Activated CD8-positive, alpha-beta T cell treated with anti-CD3 and anti-CD28 coated beads for 36 hours (primary cell): ENCODE measurements at regions of chr12 and their contacts with region 1.

Region 1: GRCh38 chr12:120649442-120650232 is 9.2 kb downstream of the CABP1 start:
- DNase-seq: no peak
- ATAC-seq: no peak
- H3K4me3 Mint-ChIP-seq: peak overlapping the region; percentile 46
- H3K27ac Mint-ChIP-seq: no peak overlapping the region
- H3K4me1 Mint-ChIP-seq: peaks cover 7% of the 10 kb centered on the region
- H3K27me3 Mint-ChIP-seq: peaks cover 48% of the 10 kb centered on the region
- CTCF ChIP-seq: peak; percentile 57

Region 2: GRCh38 chr12:120580787-120581723 is 68.6 kb before region 1 on chr12 and contains the start of gene POP5:
- CTCF ChIA-PET with region 1: interaction called, 180 read pairs
- POLR2A ChIA-PET with region 1: interaction called, 3 read pairs
- intact Hi-C with region 1: loop called (anchors 1 kb)
- DNase-seq: peak; percentile 97
- ATAC-seq: peak; percentile 96
- H3K4me3 Mint-ChIP-seq: peak within 1 kb of the TSS; percentile 98
- H3K27ac Mint-ChIP-seq: peak within 1 kb of the TSS; percentile 90
- H3K4me1 Mint-ChIP-seq: peaks cover 36% of the 10 kb centered on the region
- H3K27me3 Mint-ChIP-seq: peaks cover 13% of the 10 kb centered on the region
- CTCF ChIP-seq: no peak
- total RNA-seq, gene POP5: 44.3 to 51.1 TPM

Region 3: DNA sequence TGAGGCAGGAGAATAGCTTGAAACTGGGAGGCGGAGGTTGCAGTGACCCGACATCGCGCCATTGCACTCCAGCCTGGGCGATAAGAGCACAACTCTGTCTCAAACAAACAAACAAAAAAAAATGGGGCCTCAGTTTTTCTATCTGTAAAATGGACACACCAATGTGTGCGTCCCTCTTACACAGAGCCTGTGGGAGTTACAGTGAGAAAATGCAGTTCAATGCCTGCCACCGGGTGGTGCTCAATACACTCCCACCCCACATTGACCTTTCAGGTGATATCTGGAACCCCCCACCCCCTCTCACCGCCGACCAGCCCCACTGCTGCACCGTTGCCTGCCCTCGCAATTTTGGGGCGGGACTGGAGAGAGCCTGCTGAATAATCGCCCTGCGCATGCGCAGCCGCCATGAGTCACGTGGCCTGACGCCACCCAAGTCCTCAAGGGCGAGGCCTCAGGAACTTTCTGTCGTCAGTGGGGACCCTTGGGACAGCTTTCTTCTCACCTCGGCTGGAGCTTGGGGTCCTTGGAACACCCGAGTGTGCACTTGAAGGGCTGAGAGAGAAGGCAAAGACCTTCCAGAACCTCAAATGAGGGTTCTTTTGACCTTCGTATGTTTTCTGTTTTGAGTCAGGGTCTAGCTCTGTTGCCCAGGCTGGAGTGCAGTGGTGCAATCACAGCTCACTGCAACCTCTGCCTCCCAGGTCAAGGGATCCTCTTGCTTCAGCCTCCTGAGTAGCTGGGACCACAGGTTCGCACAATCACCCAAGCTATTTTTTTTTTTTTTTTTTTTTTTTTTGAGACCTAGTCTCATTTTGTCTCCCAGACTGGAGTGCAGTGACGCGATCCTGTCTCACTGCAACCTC is 23.8 kb before region 1 on chr12:
- CTCF ChIA-PET with region 1: interaction called, 16 read pairs
- POLR2A ChIA-PET with region 1: no interaction called
- intact Hi-C with region 1: no loop called
- DNase-seq: peak; percentile 68
- ATAC-seq: peak; percentile 91
- H3K4me3 Mint-ChIP-seq: no peak overlapping the region
- H3K27ac Mint-ChIP-seq: no peak overlapping the region
- H3K4me1 Mint-ChIP-seq: no peaks in the 10 kb centered on the region
- H3K27me3 Mint-ChIP-seq: no peaks in the 10 kb centered on the region
- CTCF ChIP-seq: no peak

Region 4: GRCh38 chr12:120677765-120678473 is 28.3 kb after region 1 on chr12:
- CTCF ChIA-PET with region 1: interaction called, 84 read pairs
- POLR2A ChIA-PET with region 1: interaction called, 3 read pairs
- intact Hi-C with region 1: no loop called
- DNase-seq: peak; percentile 55
- ATAC-seq: peak; percentile 89
- H3K4me3 Mint-ChIP-seq: no peak overlapping the region
- H3K27ac Mint-ChIP-seq: peak overlapping the region; percentile 59
- H3K4me1 Mint-ChIP-seq: peaks cover 12% of the 10 kb centered on the region
- H3K27me3 Mint-ChIP-seq: no peaks in the 10 kb centered on the region
- CTCF ChIP-seq: no peak

Region 5: DNA sequence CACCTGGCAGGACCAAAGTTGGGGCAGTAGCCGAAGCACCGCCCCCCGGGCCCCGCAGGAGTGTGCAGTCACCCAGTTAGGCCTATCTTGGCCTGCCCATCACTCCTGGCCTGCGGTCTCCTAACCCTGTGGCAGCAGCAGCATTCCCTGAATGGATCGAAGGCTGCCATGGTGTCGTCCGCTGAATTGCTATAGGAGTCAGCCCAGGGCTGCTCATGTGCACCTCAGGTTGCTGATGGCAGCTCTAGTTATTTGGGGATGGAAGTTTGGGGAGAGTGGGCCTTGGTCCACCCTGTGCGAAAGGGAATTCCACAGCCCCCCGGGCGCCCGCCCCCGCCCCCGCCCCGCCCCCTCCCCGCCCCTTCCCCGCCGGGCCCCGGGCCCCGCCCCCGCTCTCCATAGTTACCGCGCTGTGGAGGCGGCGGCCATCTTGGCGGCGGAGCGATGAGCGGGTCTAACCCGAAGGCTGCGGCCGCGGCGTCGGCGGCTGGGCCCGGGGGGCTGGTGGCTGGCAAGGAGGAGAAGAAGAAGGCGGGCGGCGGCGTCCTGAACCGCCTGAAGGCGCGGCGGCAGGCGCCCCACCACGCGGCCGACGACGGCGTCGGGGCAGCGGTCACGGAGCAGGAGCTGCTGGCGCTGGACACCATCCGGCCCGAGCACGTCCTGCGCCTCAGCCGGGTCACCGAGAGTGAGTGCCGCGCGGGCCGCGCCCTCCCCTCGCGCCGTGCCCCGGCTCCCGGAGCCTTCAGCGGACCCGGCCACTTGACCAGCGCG is 60.6 kb after region 1 on chr12 and contains the start of gene UNC119B:
- CTCF ChIA-PET with region 1: interaction called, 40 read pairs
- POLR2A ChIA-PET with region 1: interaction called, 3 read pairs
- intact Hi-C with region 1: loop called (anchors 5 kb)
- DNase-seq: peak; percentile 76
- ATAC-seq: peak; percentile 81
- H3K4me3 Mint-ChIP-seq: peak within 1 kb of the TSS; percentile 80
- H3K27ac Mint-ChIP-seq: peak within 1 kb of the TSS; percentile 76
- H3K4me1 Mint-ChIP-seq: peaks cover 26% of the 10 kb centered on the region
- H3K27me3 Mint-ChIP-seq: no peaks in the 10 kb centered on the region
- CTCF ChIP-seq: no peak
- total RNA-seq, gene UNC119B: 23.8 to 24.3 TPM

Region 6: GRCh38 chr12:120971299-120972179 is 321.9 kb after region 1 on chr12:
- CTCF ChIA-PET with region 1: interaction called, 27 read pairs
- POLR2A ChIA-PET with region 1: no interaction called
- intact Hi-C with region 1: no loop called
- DNase-seq: peak; percentile 57
- ATAC-seq: peak; percentile 98
- H3K4me3 Mint-ChIP-seq: no peak overlapping the region
- H3K27ac Mint-ChIP-seq: no peak overlapping the region
- H3K4me1 Mint-ChIP-seq: peaks cover 2% of the 10 kb centered on the region
- H3K27me3 Mint-ChIP-seq: no peaks in the 10 kb centered on the region
- CTCF ChIP-seq: peak; percentile 79